Heart left ventricle (tissue), 16 donors: ENCODE measurements at regions of chr9 and their contacts with region 1.

Region 1: GRCh38 chr9:111525056-111525977 is at the start of gene ZNF483:
- DNase-seq: peak; percentile 75 to 87 (median 76)
- ATAC-seq: peak; percentile 79 to 92 (median 87)
- H3K4me3 ChIP-seq: peak within 1 kb of the TSS; percentile 31 to 98 (median 87)
- H3K27ac ChIP-seq: peak within 1 kb of the TSS in 6 of 12 donors; percentile 6 to 72 (median 58)
- H3K4me1 ChIP-seq: peaks cover 0 to 14% (median 6%) of the 10 kb centered on the region in 12 donors
- H3K27me3 ChIP-seq: peaks cover 0 to 9% (median 0%) of the 10 kb centered on the region in 9 donors
- CTCF ChIP-seq: no peak
- POLR2A ChIP-seq: no peak
- total RNA-seq, gene ZNF483: 1.4 to 13.9 (median 5.3) TPM

Region 2: DNA sequence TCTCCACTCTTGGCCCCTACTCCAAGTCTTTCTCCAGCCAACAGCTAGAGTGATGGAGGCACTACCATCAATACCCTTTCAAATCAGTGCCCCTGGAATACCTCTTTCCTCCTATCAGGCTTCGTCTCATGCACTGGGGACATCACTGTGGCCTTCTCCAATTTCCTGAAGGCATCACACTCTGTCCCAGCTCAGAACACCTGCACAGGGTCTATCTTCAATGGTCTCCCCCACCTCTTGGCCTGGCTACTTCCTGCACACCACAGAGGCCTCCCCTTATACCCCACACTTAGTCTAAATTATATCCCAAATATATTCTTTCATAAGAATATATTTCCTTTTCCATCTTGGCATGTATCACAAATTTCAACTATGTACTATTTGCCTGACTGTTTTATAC is 75.6 kb before region 1 on chr9:
- intact Hi-C with region 1: loop called in 1 of 10 experiments (anchors 10 kb)
- DNase-seq: no peak
- ATAC-seq: peak in 2 of 4 donors; percentile 29 to 31
- H3K4me3 ChIP-seq: no peak overlapping the region
- H3K27ac ChIP-seq: peak overlapping the region in 8 of 12 donors; percentile 15 to 61 (median 30)
- H3K4me1 ChIP-seq: peaks cover 0 to 47% (median 12%) of the 10 kb centered on the region in 12 donors
- H3K27me3 ChIP-seq: no peaks in the 10 kb centered on the region
- CTCF ChIP-seq: no peak
- POLR2A ChIP-seq: no peak

Region 3: GRCh38 chr9:111483862-111484571 is 41.3 kb before region 1 on chr9 and contains the start of gene ECPAS:
- intact Hi-C with region 1: loop called in 2 of 10 experiments (anchors 2 kb)
- DNase-seq: peak; percentile 68 to 86 (median 82)
- ATAC-seq: peak; percentile 76 to 87 (median 85)
- H3K4me3 ChIP-seq: peak within 1 kb of the TSS; percentile 69 to 98 (median 94)
- H3K27ac ChIP-seq: peak within 1 kb of the TSS; percentile 92 to 99 (median 98)
- H3K4me1 ChIP-seq: peaks cover 0 to 30% (median 18%) of the 10 kb centered on the region in 12 donors
- H3K27me3 ChIP-seq: no peaks in the 10 kb centered on the region
- CTCF ChIP-seq: peak in 2 of 12 donors; percentile 11 to 12
- POLR2A ChIP-seq: peak in 1 of 2 donors; percentile 13
- total RNA-seq, gene ECPAS: 73.2 to 116 (median 103) TPM

Region 4: GRCh38 chr9:111514967-111515366 is 10.3 kb before region 1 on chr9:
- intact Hi-C with region 1: no loop called
- DNase-seq: no peak
- ATAC-seq: no peak
- H3K4me3 ChIP-seq: no peak overlapping the region
- H3K27ac ChIP-seq: no peak overlapping the region
- H3K4me1 ChIP-seq: no peaks in the 10 kb centered on the region
- H3K27me3 ChIP-seq: no peaks in the 10 kb centered on the region
- CTCF ChIP-seq: no peak
- POLR2A ChIP-seq: no peak

Region 5: DNA sequence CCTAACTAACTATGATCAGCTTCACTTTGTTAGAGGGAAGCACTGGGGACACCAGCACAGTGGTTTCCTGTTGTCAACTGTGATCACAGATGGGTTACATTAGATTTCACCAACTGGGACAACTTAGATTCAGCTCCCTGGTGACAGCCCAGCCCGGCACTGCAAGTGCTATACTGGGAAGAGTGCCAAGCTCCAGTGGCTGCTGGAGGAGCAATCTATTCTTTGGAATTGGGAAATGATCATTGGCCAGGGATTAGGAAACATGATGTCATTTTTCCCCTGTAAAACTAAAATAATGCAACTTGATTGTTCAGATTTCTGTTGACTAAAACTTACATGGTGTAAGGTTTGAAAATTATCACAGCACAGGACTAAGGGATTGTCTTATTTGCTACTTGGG is 40.9 kb after region 1 on chr9:
- intact Hi-C with region 1: loop called in 1 of 10 experiments (anchors 5 kb)
- DNase-seq: peak in 3 of 5 donors; percentile 25 to 49 (median 32)
- ATAC-seq: peak in 3 of 4 donors; percentile 52 to 59 (median 54)
- H3K4me3 ChIP-seq: no peak overlapping the region
- H3K27ac ChIP-seq: no peak overlapping the region
- H3K4me1 ChIP-seq: peaks cover 0 to 7% (median 0%) of the 10 kb centered on the region in 12 donors
- H3K27me3 ChIP-seq: no peaks in the 10 kb centered on the region
- CTCF ChIP-seq: no peak
- POLR2A ChIP-seq: no peak